Sciatic nerve (tissue), 2 donors: ENCODE measurements at regions of chr1 and their contacts with region 1.

Region 1: DNA sequence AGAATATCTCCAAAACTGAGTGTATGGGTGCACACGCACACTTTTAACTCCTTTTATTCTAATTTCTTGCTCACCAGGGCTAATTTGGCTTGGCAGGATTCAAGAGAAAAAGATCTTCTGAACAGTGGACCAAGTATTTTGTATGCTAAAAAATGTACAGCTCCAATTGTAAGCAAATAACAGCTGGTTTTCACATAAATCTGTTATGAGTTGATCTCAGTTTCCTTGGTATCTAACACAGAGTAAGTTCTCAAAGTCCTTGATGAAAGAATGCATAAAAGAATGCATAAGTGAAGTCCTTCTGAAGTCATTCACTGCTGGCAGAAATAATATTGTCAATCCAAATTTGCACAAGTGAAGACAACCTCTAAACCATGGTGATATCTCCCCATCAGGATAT is 213.0 kb downstream of the OMA1 start:
- DNase-seq: no peak
- ATAC-seq: no peak

Region 2: GRCh38 chr1:58204284-58204683 is 129.2 kb before region 1 on chr1:
- intact Hi-C with region 1: no loop called
- DNase-seq: no peak
- ATAC-seq: no peak

Region 3: DNA sequence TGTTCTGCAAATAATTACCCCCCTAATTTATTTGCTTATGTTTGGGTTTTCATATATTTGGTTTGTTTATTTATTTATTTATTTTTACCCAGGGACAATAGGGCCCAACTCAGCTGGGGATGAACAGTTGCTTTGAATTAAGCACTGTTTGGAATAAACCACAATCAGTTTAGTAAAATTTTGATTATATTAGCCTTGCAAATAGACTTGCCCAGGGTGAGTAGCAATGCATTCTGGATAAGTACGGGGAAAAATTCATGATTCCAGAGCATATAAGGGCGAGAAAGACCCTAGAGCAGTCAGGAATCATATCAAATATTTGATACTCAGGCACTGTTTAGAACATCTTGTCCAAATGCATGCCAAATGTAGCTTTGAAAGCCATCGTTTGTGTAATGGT is 29.7 kb before region 1 on chr1:
- intact Hi-C with region 1: loop called (anchors 1 kb)
- DNase-seq: no peak
- ATAC-seq: no peak